Adrenal gland (tissue), 19 donors: ENCODE measurements at regions of chr9 and their contacts with region 1.

Region 1: DNA sequence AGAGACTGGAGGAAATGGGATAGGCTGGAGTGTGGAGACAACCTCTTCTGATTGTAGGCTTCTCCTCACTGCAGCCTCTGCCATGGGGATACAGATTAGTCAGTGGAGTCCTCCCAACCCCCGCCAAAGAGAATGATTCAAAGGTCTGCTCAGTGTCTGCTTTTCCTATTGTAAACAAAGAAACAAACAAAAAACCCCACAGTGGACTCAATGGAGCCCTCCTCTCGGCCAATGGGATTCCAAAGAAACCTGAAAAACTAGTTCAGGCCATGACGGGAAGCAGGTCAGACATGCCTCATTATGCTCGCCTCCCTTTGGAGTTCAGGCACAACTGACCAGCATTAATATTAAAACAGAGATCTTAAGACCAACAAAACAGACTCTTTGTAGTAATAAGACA is 85.8 kb downstream of the SEC61B start:
- DNase-seq: no peak
- H3K4me3 ChIP-seq: no peak overlapping the region
- H3K27ac ChIP-seq: no peak overlapping the region
- H3K4me1 ChIP-seq: no peaks in the 10 kb centered on the region
- H3K27me3 ChIP-seq: no peaks in the 10 kb centered on the region
- CTCF ChIP-seq: no peak
- POLR2A ChIP-seq: no peak

Region 2: GRCh38 chr9:99356512-99356971 is 48.7 kb after region 1 on chr9:
- intact Hi-C with region 1: loop called in 1 of 2 experiments (anchors 5 kb)
- DNase-seq: peak in 4 of 7 donors; percentile 32 to 58 (median 39)
- H3K4me3 ChIP-seq: no peak overlapping the region
- H3K27ac ChIP-seq: no peak overlapping the region
- H3K4me1 ChIP-seq: no peaks in the 10 kb centered on the region
- H3K27me3 ChIP-seq: no peaks in the 10 kb centered on the region
- CTCF ChIP-seq: no peak
- POLR2A ChIP-seq: no peak

Region 3: DNA sequence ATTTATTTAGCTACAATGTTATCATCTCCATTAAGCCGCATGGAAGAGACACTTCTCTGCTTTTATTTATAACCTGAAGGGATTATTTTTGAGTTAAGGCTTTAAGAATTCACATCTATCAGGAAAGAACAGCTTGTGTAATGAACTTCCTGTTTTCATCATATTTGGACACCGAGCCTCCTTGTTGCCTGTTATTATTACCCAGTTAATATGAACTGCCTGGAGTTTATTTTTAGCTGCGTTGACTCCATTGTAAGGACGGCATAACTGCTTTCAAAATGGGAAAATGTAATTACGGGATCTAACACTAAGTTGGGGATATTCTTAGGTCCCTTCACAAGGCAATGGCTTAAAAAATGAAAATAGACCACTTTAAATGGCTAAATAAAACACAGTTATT is 424.9 kb after region 1 on chr9:
- intact Hi-C with region 1: no loop called
- DNase-seq: no peak
- H3K4me3 ChIP-seq: no peak overlapping the region
- H3K27ac ChIP-seq: peak overlapping the region in 2 of 5 donors; percentile 31
- H3K4me1 ChIP-seq: no peaks in the 10 kb centered on the region
- H3K27me3 ChIP-seq: no peaks in the 10 kb centered on the region
- CTCF ChIP-seq: no peak
- POLR2A ChIP-seq: no peak